Astrocyte of the cerebellum (primary cell): ENCODE measurements at regions of chr4 and their contacts with region 1.

Region 1: DNA sequence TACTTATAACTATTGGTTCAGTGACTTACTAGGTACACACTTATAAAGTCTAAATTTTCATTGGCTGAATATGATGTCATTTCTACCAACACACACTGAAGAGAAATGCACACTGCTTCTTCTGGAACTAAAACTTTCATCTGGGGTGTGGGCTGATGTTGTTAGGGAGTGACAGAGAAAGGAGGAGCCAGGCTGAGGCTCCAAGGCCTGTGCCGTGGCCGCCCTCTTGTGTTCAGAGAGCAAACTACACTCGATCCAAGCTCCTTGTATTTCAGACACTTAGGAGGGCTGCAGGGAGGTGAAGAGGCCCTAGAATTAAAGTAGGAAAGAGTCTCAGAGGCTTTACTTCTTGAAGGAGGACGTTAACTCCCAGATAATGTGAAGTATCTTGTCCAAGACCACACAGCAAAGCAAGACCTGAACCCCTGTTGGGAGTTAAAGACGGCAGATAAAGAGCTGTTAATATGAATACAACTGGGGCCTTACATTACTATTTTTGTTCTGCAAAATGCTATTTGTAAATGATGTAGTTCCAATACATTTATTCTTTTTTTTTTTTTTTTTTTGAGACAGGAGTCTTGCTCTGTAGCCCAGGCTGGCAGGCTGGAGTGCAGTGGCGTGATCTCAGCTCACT is 137.5 kb downstream of the AFAP1 start:
- DNase-seq: peak; percentile 72
- H3K4me3 ChIP-seq: no peak overlapping the region
- CTCF ChIP-seq: peak; percentile 92

Region 2: GRCh38 chr4:7753271-7753670 is 48.9 kb before region 1 on chr4:
- in situ Hi-C with region 1: loop called (anchors 5 kb)
- DNase-seq: no peak
- H3K4me3 ChIP-seq: no peak overlapping the region
- CTCF ChIP-seq: no peak

Region 3: DNA sequence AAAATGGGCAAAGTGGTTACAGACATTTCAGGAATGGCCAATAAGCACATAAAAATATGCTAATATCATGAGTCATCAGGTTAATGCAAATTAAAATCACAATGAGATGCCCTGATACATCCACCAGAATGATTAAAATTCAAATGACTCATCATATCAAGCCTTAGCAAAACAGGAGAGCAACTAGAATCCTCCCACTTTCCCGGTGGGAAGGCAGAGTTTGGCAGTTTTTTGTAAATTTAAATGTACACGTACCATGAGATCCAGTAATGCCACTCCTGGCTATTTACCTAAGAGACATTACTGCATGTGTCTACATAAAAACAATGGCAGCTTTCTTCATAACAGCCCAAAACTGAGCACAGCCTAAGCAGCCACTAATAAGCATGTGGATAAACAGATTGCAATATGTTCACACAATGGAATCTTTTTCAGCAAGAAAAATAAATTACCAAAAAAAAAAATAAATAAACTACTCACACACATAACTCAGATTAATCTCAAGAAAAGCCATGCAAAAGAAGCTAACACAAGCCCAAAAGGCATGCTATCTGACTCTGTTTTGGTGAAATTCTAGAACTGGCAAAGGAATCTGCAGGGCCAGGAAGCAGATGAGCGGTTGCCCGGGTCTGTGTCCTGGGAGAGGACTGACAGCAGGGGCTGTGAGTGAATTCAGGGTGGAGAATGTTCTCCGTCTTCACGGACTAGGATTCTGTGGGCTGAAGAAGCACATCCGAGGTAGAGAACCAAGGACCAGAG is 88.6 kb after region 1 on chr4:
- in situ Hi-C with region 1: no loop called
- DNase-seq: peak; percentile 87
- H3K4me3 ChIP-seq: no peak overlapping the region
- CTCF ChIP-seq: no peak